ENCODE measurements at regions of chr5 and their contacts with region 1.

Region 1: DNA sequence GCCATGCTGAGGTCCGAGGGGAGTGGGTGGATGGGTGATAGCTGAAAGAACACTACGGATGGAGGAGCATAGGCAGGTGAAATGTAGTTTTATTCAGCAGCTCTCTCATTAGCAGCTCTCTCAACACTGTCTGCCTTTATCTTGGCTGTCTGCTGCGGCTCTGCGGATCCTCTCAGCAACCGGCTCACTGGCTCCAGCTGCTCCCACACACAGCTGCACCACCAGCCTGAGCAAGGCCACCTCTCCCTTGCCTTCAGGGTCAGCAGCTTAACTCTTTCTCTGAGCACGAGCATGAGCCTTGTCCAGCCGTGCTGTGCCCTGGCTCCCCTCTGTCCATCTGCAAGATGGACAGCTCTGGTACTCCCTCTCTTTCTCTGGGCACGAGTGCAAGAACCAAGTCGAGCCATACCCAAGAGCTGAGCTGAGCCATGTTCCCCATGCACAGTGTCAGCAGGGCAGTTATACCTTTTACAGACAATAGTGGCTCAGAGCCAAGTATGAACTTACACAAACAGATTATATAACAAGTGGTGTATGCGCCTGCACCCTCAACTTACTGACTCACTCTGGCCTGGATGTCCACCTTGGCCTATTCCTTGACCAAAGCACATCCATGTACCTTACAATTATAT is 108.5 kb downstream of the MACIR start:
- DNase-seq: no peak
- H3K4me3 Mint-ChIP-seq: no peak overlapping the region
- H3K27ac Mint-ChIP-seq: no peak overlapping the region
- H3K4me1 Mint-ChIP-seq: no peaks in the 10 kb centered on the region
- H3K27me3 Mint-ChIP-seq: peaks cover 7% of the 10 kb centered on the region

Region 2: GRCh38 chr5:101390151-101390908 is 1976.7 kb before region 1 on chr5:
- intact Hi-C with region 1: no loop called
- DNase-seq: peak; percentile 58
- H3K4me3 Mint-ChIP-seq: no peak overlapping the region
- H3K27ac Mint-ChIP-seq: no peak overlapping the region
- H3K4me1 Mint-ChIP-seq: no peaks in the 10 kb centered on the region
- H3K27me3 Mint-ChIP-seq: no peaks in the 10 kb centered on the region

Region 3: DNA sequence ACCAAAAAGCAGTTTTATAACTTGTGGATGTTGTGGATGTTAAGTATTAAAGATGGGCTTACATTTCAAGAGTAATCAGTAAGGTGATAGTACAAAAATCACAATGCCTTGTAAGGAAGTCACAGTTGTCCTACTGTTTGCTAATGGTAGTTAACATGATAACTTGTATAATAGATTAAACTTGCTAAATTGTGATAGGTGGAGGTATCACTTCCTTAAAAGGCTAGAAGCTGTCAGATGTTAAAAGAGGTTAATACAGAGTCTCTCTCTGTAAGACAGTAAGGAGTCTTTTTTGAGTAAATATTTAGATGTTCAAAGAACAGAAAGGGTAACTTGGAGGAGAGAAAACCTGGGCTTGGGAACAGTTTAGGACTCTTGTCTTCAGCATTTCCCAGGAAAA is 122.6 kb before region 1 on chr5:
- intact Hi-C with region 1: no loop called
- DNase-seq: no peak
- H3K4me3 Mint-ChIP-seq: no peak overlapping the region
- H3K27ac Mint-ChIP-seq: no peak overlapping the region
- H3K4me1 Mint-ChIP-seq: peaks cover 5% of the 10 kb centered on the region
- H3K27me3 Mint-ChIP-seq: peaks cover 61% of the 10 kb centered on the region

Region 4: GRCh38 chr5:103333376-103333775 is 33.7 kb before region 1 on chr5:
- intact Hi-C with region 1: no loop called
- DNase-seq: no peak
- H3K4me3 Mint-ChIP-seq: no peak overlapping the region
- H3K27ac Mint-ChIP-seq: no peak overlapping the region
- H3K4me1 Mint-ChIP-seq: no peaks in the 10 kb centered on the region
- H3K27me3 Mint-ChIP-seq: peaks cover 14% of the 10 kb centered on the region

Region 5: DNA sequence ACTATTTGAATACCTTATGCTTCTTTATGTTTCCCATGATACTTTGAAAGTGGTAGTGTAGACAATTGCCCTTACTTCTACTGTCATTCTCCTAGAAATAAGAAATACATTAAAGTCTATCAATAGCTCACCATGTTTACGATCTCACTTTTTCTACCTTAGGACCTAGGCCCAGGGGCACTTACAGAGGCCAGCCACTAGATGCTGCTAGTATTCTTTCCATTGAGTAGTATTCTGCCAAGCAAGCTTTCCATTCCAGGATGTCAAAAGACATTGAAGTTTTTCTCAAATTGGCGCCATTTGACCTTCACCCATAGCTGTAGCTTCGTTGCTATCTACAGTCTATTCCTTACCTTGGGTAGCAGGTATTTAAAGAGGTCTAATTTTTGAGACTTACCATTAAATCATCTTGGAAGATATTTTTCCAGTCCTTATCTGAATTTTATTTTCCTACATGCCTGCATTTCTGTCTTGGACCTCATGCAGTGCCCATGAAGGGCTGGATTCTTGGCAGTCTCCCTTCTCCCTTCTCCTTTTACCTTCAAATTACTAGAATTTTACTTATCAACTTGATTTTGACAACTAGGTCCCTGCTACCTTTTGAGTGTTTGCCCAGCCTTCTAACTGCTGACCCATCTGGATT is 441.6 kb after region 1 on chr5:
- intact Hi-C with region 1: loop called (anchors 5 kb)
- DNase-seq: no peak
- H3K4me3 Mint-ChIP-seq: no peak overlapping the region
- H3K27ac Mint-ChIP-seq: no peak overlapping the region
- H3K4me1 Mint-ChIP-seq: no peaks in the 10 kb centered on the region
- H3K27me3 Mint-ChIP-seq: no peaks in the 10 kb centered on the region

Region 6: DNA sequence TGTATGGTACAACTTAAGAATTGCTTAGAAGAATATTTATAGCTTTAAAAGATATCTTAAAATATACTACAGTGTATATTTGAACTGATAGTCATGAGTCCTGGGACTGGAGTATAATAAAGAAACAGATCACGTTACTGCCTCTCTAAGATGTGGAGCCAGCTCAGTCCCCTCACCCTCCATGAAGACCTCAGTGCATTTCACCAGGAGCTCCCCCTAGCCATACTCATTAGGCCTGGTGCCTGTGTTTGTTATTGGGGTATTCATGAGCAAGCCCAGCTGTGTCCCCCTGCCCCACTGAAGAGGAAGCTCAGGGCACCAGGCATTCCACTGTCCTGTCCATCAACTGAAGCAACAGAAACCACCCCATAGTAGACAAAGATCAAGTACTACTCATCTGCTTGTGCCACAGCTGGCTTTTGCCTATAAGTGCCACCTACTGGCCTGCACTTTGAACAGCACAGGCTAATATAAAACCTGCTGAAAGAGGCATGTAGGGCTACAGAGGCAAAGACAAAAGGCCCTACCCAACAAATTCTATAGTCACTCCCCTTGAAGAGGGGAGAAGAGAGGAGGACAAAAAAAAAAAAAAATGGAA is 1045.7 kb after region 1 on chr5:
- intact Hi-C with region 1: no loop called
- DNase-seq: no peak
- H3K4me3 Mint-ChIP-seq: no peak overlapping the region
- H3K27ac Mint-ChIP-seq: no peak overlapping the region
- H3K4me1 Mint-ChIP-seq: no peaks in the 10 kb centered on the region
- H3K27me3 Mint-ChIP-seq: no peaks in the 10 kb centered on the region